ENCODE measurements at regions of chr1 and their contacts with region 1.

Region 1: GRCh38 chr1:201170533-201171062 is 16.3 kb upstream of the TMEM9 start:
- DNase-seq: peak; percentile 82 to 93 (median 88)
- H3K4me3 ChIP-seq: peak overlapping the region; percentile 24 to 87 (median 72)
- H3K27ac ChIP-seq: peak overlapping the region in 1 of 2 experiments; percentile 43
- H3K4me1 ChIP-seq: peaks cover 0 to 13% (median 8%) of the 10 kb centered on the region in 4 experiments
- H3K27me3 ChIP-seq: peaks cover 0 to 22% (median 0%) of the 10 kb centered on the region in 5 experiments

Region 2: DNA sequence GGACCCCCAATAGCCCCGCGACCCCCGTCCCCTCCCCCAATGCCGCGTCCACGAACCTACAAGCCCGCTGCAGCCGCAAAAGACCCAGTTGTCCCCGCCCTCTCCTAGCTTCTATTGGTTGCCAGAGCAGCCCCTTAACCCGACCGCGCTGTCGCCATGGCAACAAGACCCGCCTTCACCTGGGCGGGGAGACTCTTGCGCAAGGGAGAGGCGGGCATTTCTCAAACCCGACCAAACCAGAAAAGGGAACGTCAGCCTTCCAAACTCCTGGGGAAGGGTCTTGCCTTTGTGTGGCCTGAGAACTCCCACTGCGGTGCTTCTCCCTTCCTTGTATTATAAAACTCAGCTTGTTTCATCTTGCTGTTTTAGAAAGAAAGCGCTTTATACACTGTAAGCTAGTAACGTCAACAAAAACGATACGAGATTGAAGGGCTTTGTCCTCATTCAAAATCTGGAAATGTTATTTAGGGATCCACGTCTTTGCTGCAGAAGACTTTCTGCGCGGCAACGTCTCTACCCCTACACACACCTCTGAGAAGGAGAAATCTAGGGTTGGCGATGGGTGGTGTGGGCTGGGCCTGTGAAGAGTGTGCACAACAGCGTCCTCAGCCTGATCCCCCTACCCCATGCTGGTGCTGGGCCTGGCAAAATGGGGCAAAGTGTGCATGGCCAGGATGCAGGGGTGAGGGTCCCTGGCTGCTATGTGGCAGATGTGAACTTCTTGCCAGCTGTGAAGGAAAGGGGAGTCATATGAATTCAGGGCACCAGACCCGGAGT is 16.0 kb before region 1 on chr1 and contains the start of gene TMEM9:
- CTCF ChIA-PET with region 1: interaction called, 89 read pairs
- POLR2A ChIA-PET with region 1: interaction called, 3 read pairs
- DNase-seq: peak; percentile 94 to 98 (median 96)
- H3K4me3 ChIP-seq: peak within 1 kb of the TSS; percentile 67 to 89 (median 80)
- H3K27ac ChIP-seq: peak within 1 kb of the TSS in 1 of 2 experiments; percentile 85
- H3K4me1 ChIP-seq: peaks cover 4 to 18% (median 12%) of the 10 kb centered on the region in 4 experiments
- H3K27me3 ChIP-seq: no peaks in the 10 kb centered on the region